Activated CD4-positive, alpha-beta memory T cell treated with anti-CD3 and anti-CD28 coated beads, Interleukin-2, amount 10 ng/mL, durations not matched to agents 7 days and 5 days (primary cell): ENCODE measurements at regions of chr3 and their contacts with region 1.

Region 1: GRCh38 chr3:49411968-49412631 is at the starts of genes RHOA and TCTA:
- DNase-seq: peak; percentile 99
- H3K4me3 Mint-ChIP-seq: peak within 1 kb of the TSS; percentile 98
- H3K27ac Mint-ChIP-seq: peak within 1 kb of the TSS; percentile 99
- H3K4me1 Mint-ChIP-seq: peaks cover 68% of the 10 kb centered on the region
- H3K27me3 Mint-ChIP-seq: peaks cover 2% of the 10 kb centered on the region
- total RNA-seq, gene RHOA: 504 to 505 TPM
- total RNA-seq, gene TCTA: 19.7 to 22.4 TPM

Region 2: GRCh38 chr3:49351521-49352011 is 60.5 kb before region 1 on chr3:
- CTCF ChIA-PET with region 1: no interaction called
- POLR2A ChIA-PET with region 1: interaction called, 21 read pairs
- DNase-seq: no peak
- H3K4me3 Mint-ChIP-seq: no peak overlapping the region
- H3K27ac Mint-ChIP-seq: peak overlapping the region; percentile 87
- H3K4me1 Mint-ChIP-seq: peaks cover 27% of the 10 kb centered on the region
- H3K27me3 Mint-ChIP-seq: no peaks in the 10 kb centered on the region

Region 3: DNA sequence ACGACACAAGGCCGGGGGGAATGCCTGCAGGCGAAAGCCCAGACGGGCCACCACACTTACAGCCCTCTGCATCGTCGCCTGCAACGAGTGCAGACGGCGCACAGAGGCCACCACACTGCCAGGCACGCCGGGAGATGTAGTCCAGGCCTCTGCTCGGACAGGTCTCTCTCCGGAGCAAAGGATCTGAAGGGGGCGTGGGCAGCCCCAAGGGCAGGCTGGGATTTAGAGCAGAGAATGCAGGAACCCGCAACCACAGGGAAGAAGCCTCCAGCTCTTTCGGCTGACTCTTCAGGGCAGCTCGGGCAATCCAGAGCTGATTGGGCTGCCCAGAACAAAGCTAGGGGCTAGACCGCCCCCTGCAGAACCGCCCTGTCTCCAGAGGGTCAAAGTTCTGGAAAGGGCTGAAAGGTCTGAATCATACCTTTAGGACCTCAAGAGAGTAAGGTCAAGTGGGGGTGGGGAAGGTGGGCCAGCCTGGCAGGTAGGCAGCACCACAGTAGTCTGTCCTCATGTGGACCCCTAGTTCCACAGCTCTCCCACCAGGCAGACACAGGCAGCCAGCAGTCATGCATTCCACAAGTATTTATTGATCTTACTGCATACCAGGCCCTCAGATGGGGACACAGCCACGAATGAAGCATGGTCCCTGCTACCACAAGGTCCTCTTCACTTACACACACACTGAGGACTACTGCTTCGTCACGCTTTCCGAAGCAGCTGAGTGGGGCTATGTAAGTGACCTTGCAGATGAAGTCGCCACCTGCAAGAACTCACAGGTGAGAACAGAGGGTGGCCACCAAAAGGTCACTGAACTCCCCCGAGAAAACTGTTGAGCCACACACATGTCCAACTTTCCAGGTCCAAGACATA is 10.5 kb after region 1 on chr3 and contains the start of gene AMT:
- CTCF ChIA-PET with region 1: interaction called, 28 read pairs
- POLR2A ChIA-PET with region 1: interaction called, 79 read pairs
- DNase-seq: no peak
- H3K4me3 Mint-ChIP-seq: no peak within 1 kb of the TSS
- H3K27ac Mint-ChIP-seq: no peak within 1 kb of the TSS
- H3K4me1 Mint-ChIP-seq: peaks cover 44% of the 10 kb centered on the region
- H3K27me3 Mint-ChIP-seq: no peaks in the 10 kb centered on the region
- total RNA-seq, gene AMT: 3.5 to 5.2 TPM

Region 4: DNA sequence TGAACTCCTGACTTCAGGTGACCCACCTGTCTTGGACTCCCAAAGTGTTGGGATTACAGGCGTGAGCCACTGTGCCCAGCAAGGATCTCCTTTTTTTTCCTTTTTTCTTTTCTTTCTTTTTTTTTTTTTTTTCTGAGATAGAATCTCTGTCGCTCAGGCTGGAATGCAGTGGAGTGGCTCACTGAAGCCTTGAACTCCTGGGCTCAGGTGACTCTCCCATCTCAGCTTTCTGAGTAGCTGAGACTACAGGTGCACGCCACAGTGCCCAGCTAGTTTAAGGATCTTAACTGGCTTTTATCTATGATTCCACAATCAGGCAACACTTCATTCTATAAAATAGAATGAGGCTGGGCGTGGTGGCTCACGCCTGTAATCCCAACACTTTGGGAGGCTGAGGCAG is 33.3 kb after region 1 on chr3:
- CTCF ChIA-PET with region 1: interaction called, 46 read pairs
- POLR2A ChIA-PET with region 1: interaction called, 37 read pairs
- DNase-seq: no peak
- H3K4me3 Mint-ChIP-seq: no peak overlapping the region
- H3K27ac Mint-ChIP-seq: peak overlapping the region; percentile 44
- H3K4me1 Mint-ChIP-seq: peaks cover 21% of the 10 kb centered on the region
- H3K27me3 Mint-ChIP-seq: no peaks in the 10 kb centered on the region

Region 5: DNA sequence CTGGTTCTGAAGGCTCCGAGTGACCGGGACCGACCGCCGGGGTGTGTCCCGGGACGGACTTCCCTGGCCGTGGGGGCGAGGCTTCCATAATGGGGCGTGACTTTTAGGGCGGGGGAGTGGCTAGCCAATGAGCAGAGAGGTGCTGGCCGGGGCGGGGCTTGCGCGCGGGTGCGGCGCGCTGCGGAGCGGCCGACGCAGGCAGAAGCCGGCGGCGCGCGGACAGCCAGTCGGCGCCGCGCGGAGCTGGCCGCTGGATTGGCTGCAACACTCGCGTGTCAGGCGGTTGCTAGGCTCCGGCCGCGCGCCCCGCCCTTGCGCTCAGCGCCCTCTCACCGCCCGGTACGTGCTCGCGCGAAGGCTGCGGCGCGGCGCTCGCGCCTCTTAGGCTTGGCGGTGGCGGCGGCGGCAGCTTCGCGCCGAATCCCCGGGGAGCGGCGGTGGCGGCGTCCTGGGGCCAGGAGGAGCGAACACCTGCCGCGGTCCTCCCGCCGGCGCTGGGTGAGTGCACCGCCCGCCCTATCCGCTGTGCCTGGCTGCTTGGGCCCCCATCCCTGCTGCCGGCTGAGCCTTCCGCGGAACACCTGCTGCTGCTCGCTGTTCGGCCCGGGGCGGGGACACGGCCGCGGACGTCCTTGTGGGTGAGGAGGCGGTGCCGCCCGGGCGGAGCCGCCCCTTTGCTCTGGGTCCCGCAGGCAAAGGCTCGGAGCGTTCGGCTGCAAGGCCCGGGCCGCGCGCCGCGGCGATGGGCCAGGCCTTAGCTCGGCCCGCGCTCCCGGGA is 58.0 kb after region 1 on chr3 and contains the start of gene DAG1:
- CTCF ChIA-PET with region 1: interaction called, 3 read pairs
- POLR2A ChIA-PET with region 1: interaction called, 23 read pairs
- DNase-seq: peak; percentile 97
- H3K4me3 Mint-ChIP-seq: peak within 1 kb of the TSS; percentile 89
- H3K27ac Mint-ChIP-seq: peak within 1 kb of the TSS; percentile 94
- H3K4me1 Mint-ChIP-seq: peaks cover 22% of the 10 kb centered on the region
- H3K27me3 Mint-ChIP-seq: no peaks in the 10 kb centered on the region
- total RNA-seq, gene DAG1: 13.8 to 16.5 TPM